ENCODE measurements at regions of chr5 and their contacts with region 1.

Region 1: GRCh38 chr5:168404365-168404764 is 81.9 kb upstream of the RARS1 start:
- DNase-seq: no peak
- H3K4me3 Mint-ChIP-seq: no peak overlapping the region
- H3K27ac Mint-ChIP-seq: no peak overlapping the region
- H3K4me1 Mint-ChIP-seq: peaks cover 45% of the 10 kb centered on the region
- H3K27me3 Mint-ChIP-seq: no peaks in the 10 kb centered on the region
- CTCF ChIP-seq: no peak

Region 2: GRCh38 chr5:168365581-168366081 is 38.7 kb before region 1 on chr5:
- CTCF ChIA-PET with region 1: interaction called, 6 read pairs
- intact Hi-C with region 1: loop called (anchors 1 kb)
- DNase-seq: peak; percentile 82
- H3K4me3 Mint-ChIP-seq: peak overlapping the region; percentile 49
- H3K27ac Mint-ChIP-seq: peak overlapping the region; percentile 72
- H3K4me1 Mint-ChIP-seq: peaks cover 66% of the 10 kb centered on the region
- H3K27me3 Mint-ChIP-seq: no peaks in the 10 kb centered on the region
- CTCF ChIP-seq: peak; percentile 50